B cell (primary cell): ENCODE measurements at regions of chr10 and their contacts with region 1.

Region 1: GRCh38 chr10:5813287-5814109 is at the start of gene GDI2:
- DNase-seq: peak; percentile 98
- ATAC-seq: peak; percentile 87
- H3K4me3 ChIP-seq: peak within 1 kb of the TSS; percentile 77 to 98 (median 93)
- H3K4me3 Mint-ChIP-seq: peak within 1 kb of the TSS; percentile 91
- H3K27ac ChIP-seq: peak within 1 kb of the TSS; percentile 89 to 94
- H3K27ac Mint-ChIP-seq: peak within 1 kb of the TSS; percentile 96
- H3K4me1 ChIP-seq: peaks cover 66 to 73% of the 10 kb centered on the region in 2 donors
- H3K4me1 Mint-ChIP-seq: peaks cover 73% of the 10 kb centered on the region
- H3K27me3 ChIP-seq: no peaks in the 10 kb centered on the region
- H3K27me3 Mint-ChIP-seq: no peaks in the 10 kb centered on the region
- CTCF ChIP-seq: no peak
- total RNA-seq, gene GDI2: 187 and 189 TPM in 2 replicates

Region 2: DNA sequence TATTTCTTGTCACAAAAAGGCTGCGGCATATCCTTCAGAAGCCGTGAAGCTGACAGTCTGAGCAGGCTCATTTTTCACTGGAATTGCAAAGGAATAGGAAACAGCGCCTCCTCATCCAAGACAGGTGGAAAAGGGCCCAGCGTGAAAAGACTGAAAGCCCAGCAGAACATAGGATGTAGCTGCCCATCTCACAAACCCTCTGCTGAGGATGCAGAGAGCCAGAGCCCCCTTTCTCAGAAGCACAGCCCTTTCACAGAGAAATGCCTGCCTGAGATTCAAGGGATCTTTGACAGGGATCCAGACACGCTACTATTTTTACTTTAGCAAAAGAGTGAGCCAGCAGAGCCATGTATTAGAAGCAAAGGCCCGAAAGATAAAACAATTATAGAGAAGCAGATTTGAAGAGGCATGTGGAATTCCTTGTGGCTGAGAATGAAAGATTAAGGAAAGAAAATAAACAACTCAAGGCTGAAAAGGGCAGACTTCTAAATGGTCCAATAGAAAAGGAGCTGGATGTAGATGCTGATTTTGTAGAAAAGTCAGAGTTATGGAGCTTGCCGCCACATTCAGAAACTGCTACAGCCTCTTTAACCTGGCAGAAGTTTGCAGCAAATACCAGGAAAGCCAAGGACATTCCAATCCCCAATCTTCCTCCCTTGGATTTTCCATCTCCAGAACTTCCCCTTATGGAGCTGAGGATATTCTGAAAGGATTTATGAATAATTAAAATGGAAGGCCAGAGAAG is 37.2 kb before region 1 on chr10:
- CTCF ChIA-PET with region 1: no interaction called
- POLR2A ChIA-PET with region 1: no interaction called
- intact Hi-C with region 1: loop called (anchors 5 kb)
- DNase-seq: no peak
- ATAC-seq: no peak
- H3K4me3 ChIP-seq: no peak overlapping the region
- H3K4me3 Mint-ChIP-seq: no peak overlapping the region
- H3K27ac ChIP-seq: peak overlapping the region; percentile 47 to 61
- H3K27ac Mint-ChIP-seq: peak overlapping the region; percentile 7
- H3K4me1 ChIP-seq: peaks cover 10 to 28% of the 10 kb centered on the region in 2 donors
- H3K4me1 Mint-ChIP-seq: peaks cover 50% of the 10 kb centered on the region
- H3K27me3 ChIP-seq: no peaks in the 10 kb centered on the region
- H3K27me3 Mint-ChIP-seq: no peaks in the 10 kb centered on the region
- CTCF ChIP-seq: no peak

Region 3: DNA sequence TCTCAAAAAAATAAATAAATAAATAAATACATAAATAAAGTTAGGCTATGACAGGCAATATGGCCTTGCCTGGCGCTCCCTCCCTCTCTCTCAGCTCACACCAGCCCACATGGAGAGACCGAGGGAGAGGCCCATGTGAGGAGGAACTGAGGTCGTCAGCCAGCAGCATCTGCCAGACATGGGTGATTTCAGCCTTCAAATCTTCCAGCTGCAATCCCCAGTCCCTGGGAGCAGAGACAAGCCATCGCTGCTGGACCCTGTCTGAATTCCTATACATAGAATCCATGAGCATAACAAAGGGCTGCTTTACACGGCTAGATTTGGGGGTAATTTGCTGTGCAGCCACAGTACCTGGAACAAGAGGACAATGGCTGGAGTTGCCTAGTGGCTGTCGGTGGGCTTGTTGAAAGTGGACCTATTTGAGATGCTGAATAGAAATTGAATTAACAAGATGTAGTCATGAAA is 40.6 kb after region 1 on chr10:
- CTCF ChIA-PET with region 1: interaction called, 5 read pairs
- POLR2A ChIA-PET with region 1: interaction called, 39 read pairs
- intact Hi-C with region 1: loop called (anchors 1 kb)
- DNase-seq: no peak
- ATAC-seq: no peak
- H3K4me3 ChIP-seq: no peak overlapping the region
- H3K4me3 Mint-ChIP-seq: no peak overlapping the region
- H3K27ac ChIP-seq: no peak overlapping the region
- H3K27ac Mint-ChIP-seq: no peak overlapping the region
- H3K4me1 ChIP-seq: peaks cover 19 to 52% of the 10 kb centered on the region in 2 donors
- H3K4me1 Mint-ChIP-seq: peaks cover 37% of the 10 kb centered on the region
- H3K27me3 ChIP-seq: no peaks in the 10 kb centered on the region
- H3K27me3 Mint-ChIP-seq: no peaks in the 10 kb centered on the region
- CTCF ChIP-seq: no peak

Region 4: DNA sequence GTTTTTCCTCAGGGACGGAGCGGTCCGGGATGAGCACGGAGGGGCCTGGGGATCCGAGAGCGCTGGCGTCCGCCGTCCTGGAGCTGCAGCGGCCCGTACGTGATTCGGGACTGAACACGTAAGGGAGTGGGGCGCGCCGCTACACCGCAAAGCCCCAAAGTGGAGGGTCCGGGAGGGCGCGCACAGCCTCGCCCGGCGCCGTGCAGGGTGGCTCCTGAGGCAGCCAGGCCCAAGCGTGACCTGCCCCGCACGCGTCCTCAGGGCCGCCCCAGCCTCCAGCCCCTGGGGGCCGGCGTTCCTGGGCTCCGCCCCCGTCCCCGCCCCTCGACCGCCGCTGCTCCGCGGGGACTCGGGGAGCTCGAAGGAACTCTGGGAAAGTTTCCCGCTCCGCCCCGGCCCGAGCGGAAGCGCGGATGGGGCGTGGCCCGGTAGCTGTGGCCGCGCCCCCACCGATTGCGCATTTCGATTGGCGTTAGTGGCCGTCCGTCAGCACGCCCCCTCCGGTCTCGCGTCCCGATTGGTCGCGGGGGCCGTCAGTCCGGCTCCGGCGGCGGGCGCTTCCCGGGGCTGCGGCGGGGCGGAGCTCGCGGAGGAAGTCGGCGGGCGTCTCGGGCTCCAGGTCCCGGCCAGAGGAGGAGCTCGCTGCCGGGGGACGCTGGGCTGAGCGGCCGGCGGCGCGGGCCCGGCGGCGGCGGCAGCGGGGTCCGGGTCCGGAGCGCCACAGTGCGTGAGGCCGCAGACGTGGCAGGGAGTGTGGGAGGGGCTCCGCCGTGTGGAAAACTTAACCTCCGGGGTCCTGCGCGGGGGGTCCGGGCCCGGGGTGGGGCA is 76.3 kb after region 1 on chr10 and contains the starts of genes ANKRD16 and FBH1:
- CTCF ChIA-PET with region 1: interaction called, 9 read pairs
- POLR2A ChIA-PET with region 1: interaction called, 17 read pairs
- intact Hi-C with region 1: loop called (anchors 1 kb)
- DNase-seq: peak; percentile 99
- ATAC-seq: peak; percentile 84
- H3K4me3 ChIP-seq: peak within 1 kb of the TSS; percentile 51 to 88 (median 77)
- H3K4me3 Mint-ChIP-seq: peak within 1 kb of the TSS; percentile 94
- H3K27ac ChIP-seq: peak within 1 kb of the TSS; percentile 48 to 77
- H3K27ac Mint-ChIP-seq: peak within 1 kb of the TSS; percentile 88
- H3K4me1 ChIP-seq: peaks cover 28 to 33% of the 10 kb centered on the region in 2 donors
- H3K4me1 Mint-ChIP-seq: peaks cover 58% of the 10 kb centered on the region
- H3K27me3 ChIP-seq: no peaks in the 10 kb centered on the region
- H3K27me3 Mint-ChIP-seq: no peaks in the 10 kb centered on the region
- CTCF ChIP-seq: no peak
- total RNA-seq, gene ANKRD16: 12.6 and 13.1 TPM in 2 replicates
- total RNA-seq, gene FBH1: 129 and 138 TPM in 2 replicates

Region 5: GRCh38 chr10:5987747-5988146 is 174.2 kb after region 1 on chr10:
- CTCF ChIA-PET with region 1: no interaction called
- POLR2A ChIA-PET with region 1: no interaction called
- intact Hi-C with region 1: no loop called
- DNase-seq: peak; percentile 29
- ATAC-seq: no peak
- H3K4me3 ChIP-seq: no peak overlapping the region
- H3K4me3 Mint-ChIP-seq: peak overlapping the region; percentile 42
- H3K27ac ChIP-seq: no peak overlapping the region
- H3K27ac Mint-ChIP-seq: peak overlapping the region; percentile 54
- H3K4me1 ChIP-seq: peaks cover 7 to 9% of the 10 kb centered on the region in 2 donors
- H3K4me1 Mint-ChIP-seq: peaks cover 12% of the 10 kb centered on the region
- H3K27me3 ChIP-seq: no peaks in the 10 kb centered on the region
- H3K27me3 Mint-ChIP-seq: no peaks in the 10 kb centered on the region
- CTCF ChIP-seq: no peak

Region 6: GRCh38 chr10:6044060-6044459 is 230.6 kb after region 1 on chr10:
- CTCF ChIA-PET with region 1: no interaction called
- POLR2A ChIA-PET with region 1: no interaction called
- intact Hi-C with region 1: no loop called
- DNase-seq: no peak
- ATAC-seq: peak; percentile 42
- H3K4me3 ChIP-seq: no peak overlapping the region
- H3K4me3 Mint-ChIP-seq: peak overlapping the region; percentile 82
- H3K27ac ChIP-seq: peak overlapping the region in 1 of 2 donors; percentile 69
- H3K27ac Mint-ChIP-seq: peak overlapping the region; percentile 94
- H3K4me1 ChIP-seq: peaks cover 44% of the 10 kb centered on the region in 2 donors
- H3K4me1 Mint-ChIP-seq: peaks cover 70% of the 10 kb centered on the region
- H3K27me3 ChIP-seq: no peaks in the 10 kb centered on the region
- H3K27me3 Mint-ChIP-seq: no peaks in the 10 kb centered on the region
- CTCF ChIP-seq: no peak